PC-9 (cell line): ENCODE measurements at regions of chr14 and their contacts with region 1.

Region 1: GRCh38 chr14:81303248-81304221 is 82.8 kb upstream of the GTF2A1 start:
- DNase-seq: peak; percentile 71 to 97
- H3K4me3 ChIP-seq: peak overlapping the region; percentile 7; the same call in 1 of the 2 replicates
- H3K27ac ChIP-seq: peak overlapping the region; percentile 96
- H3K4me1 ChIP-seq: peaks cover 35% of the 10 kb centered on the region
- H3K27me3 ChIP-seq: no peaks in the 10 kb centered on the region
- CTCF ChIP-seq: no peak

Region 2: GRCh38 chr14:81400852-81401251 is 97.3 kb after region 1 on chr14:
- CTCF ChIA-PET with region 1: no interaction called
- POLR2A ChIA-PET with region 1: no interaction called
- intact Hi-C with region 1: loop called (anchors 1 kb)
- DNase-seq: peak; percentile 61 to 95
- H3K4me3 ChIP-seq: peak overlapping the region; percentile 38; the same call in 1 of the 2 replicates
- H3K27ac ChIP-seq: peak overlapping the region; percentile 99
- H3K4me1 ChIP-seq: peaks cover 48% of the 10 kb centered on the region
- H3K27me3 ChIP-seq: no peaks in the 10 kb centered on the region
- CTCF ChIP-seq: no peak